Activated CD4-positive, alpha-beta memory T cell treated with anti-CD3 and anti-CD28 coated beads, Interleukin-2, amount 10 ng/mL, durations not matched to agents 7 days and 5 days (primary cell): ENCODE measurements at regions of chr17 and their contacts with region 1.

Region 1: DNA sequence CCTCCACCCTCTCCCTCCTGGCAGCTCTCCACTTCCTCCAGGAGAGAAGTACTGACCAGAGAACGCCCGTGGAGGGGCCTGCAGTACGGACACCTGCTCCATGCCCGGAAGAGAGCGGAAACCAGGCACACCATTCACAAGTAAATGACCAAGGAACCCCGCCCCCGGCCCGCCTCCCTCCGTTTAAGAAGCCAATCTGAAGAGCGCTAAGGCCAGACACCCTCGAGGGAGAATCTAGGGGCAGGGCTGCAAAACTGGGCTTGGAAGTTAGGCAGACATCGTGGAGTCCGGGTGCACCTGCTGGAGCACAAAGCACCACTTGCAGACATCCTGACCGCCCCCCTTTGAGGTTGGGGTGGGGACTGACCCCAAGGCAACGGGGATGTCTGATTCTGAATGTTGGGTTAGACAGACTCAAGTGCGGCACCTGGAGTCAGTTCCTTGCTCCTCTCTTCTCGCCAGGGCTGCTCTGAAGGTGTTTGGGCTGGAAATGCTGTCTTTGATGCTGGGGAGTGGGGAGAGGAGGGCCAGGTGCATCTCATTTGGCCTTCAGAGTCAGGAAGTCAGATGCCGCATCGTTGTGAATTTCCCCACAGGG is 964 bp upstream of the FAAP100 start:
- DNase-seq: peak; percentile 85
- H3K4me3 Mint-ChIP-seq: peak overlapping the region; percentile 83
- H3K27ac Mint-ChIP-seq: peak overlapping the region; percentile 89
- H3K4me1 Mint-ChIP-seq: peaks cover 35% of the 10 kb centered on the region
- H3K27me3 Mint-ChIP-seq: no peaks in the 10 kb centered on the region

Region 2: DNA sequence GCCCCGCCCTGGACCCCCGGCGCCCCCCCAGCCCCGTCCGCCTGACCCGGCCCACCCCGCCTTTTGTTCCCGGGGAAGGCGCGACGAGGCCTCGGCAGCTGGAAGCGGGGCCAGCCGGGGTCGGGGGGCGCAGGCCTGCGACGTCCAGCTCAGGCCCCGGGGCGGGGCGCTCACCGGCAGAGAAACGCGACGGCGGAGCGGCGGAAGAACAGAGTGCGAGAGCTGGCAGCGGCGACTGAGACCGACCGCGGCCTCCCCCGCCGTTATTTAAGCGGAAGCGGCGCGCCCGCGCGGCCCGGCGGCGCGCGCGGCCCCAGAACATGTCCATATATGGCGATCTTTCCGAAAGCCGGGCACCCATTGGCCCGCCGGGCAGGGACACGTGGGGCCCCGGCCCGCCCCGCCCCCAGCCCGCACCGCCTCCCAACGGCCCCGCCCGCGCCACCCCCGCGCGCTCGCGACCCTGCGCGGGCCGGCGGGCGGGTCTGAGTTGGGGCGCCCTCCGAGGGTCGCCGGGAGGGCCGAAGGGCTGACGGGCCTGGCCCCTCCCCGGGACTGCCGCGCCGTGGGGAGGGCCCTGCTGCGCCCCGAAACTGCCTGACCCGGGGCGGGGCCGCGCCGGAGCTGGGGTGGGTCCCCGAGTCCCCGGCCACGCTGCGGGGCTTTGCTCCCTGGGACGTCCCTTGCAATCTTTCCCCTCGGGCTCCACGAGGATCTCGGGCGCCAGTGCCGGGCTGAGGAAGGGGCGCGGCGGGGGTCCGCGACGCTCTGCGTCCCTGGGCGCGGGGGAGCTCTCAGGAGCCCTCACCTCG is 40.4 kb before region 1 on chr17 and contains the start of gene ACTG1:
- CTCF ChIA-PET with region 1: no interaction called
- POLR2A ChIA-PET with region 1: interaction called, 24 read pairs
- DNase-seq: peak; percentile 92
- H3K4me3 Mint-ChIP-seq: peak within 1 kb of the TSS; percentile 93
- H3K27ac Mint-ChIP-seq: peak within 1 kb of the TSS; percentile 90
- H3K4me1 Mint-ChIP-seq: peaks cover 39% of the 10 kb centered on the region
- H3K27me3 Mint-ChIP-seq: no peaks in the 10 kb centered on the region
- total RNA-seq, gene ACTG1: 3,658 to 3,769 TPM